GM12878 (cell line): ENCODE measurements at regions of chr14 and their contacts with region 1.

Region 1: DNA sequence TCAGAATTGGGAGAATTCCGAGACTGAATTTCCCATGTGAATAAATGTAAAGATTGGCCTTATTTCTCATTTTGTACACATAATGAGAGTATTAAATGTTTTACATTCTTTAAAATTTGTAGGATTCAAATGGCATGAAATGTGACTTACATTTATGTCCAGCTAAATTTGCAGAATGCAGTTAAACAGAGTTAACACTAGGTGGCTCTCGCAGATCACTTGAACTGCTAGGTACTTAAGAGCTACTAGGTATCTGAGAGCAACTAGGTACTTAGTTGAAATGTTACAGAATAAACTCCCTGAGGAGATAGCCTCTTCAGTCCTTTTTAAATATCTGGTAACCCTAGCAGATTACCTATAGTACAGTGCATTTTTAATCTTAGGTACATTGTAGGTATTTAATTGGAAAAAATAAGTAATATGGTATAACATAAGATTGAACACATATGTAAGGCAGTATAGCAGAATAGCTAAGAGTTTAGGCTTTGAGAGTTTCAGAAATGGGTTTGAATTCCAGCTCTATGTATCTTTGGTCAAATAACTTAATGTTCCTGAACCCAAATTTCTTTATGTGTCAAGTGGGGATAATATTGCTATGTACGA is 73.8 kb downstream of the KIAA0586 start:
- DNase-seq: peak; percentile 30
- ATAC-seq: peak; percentile 91
- H3K4me3 ChIP-seq: no peak overlapping the region
- H3K27ac ChIP-seq: no peak overlapping the region
- H3K4me1 ChIP-seq: no peaks in the 10 kb centered on the region
- H3K27me3 ChIP-seq: no peaks in the 10 kb centered on the region
- CTCF ChIP-seq: peak; percentile 72 to 89 (median 75)
- EP300 ChIP-seq: no peak
- POLR2A ChIP-seq: no peak
- RAD21 ChIP-seq: peak; percentile 96

Region 2: GRCh38 chr14:58088961-58089360 is 412.4 kb before region 1 on chr14:
- CTCF ChIA-PET with region 1: no interaction called
- POLR2A ChIA-PET with region 1: no interaction called
- RAD21 ChIA-PET with region 1: no interaction called
- SMC1A ChIA-PET with region 1: no interaction called
- in situ Hi-C with region 1: no loop called
- intact Hi-C with region 1: no loop called
- DNase-seq: no peak
- ATAC-seq: no peak
- H3K4me3 ChIP-seq: no peak overlapping the region
- H3K27ac ChIP-seq: no peak overlapping the region
- H3K4me1 ChIP-seq: no peaks in the 10 kb centered on the region
- H3K27me3 ChIP-seq: no peaks in the 10 kb centered on the region; a peak in 1 of 4 replicates
- CTCF ChIP-seq: no peak
- EP300 ChIP-seq: no peak
- POLR2A ChIP-seq: no peak
- RAD21 ChIP-seq: no peak

Region 3: GRCh38 chr14:58414845-58415244 is 86.5 kb before region 1 on chr14:
- CTCF ChIA-PET with region 1: no interaction called
- POLR2A ChIA-PET with region 1: no interaction called
- RAD21 ChIA-PET with region 1: no interaction called
- SMC1A ChIA-PET with region 1: no interaction called
- in situ Hi-C with region 1: no loop called
- intact Hi-C with region 1: no loop called
- DNase-seq: no peak
- ATAC-seq: peak; percentile 75
- H3K4me3 ChIP-seq: no peak overlapping the region
- H3K27ac ChIP-seq: no peak overlapping the region
- H3K4me1 ChIP-seq: no peaks in the 10 kb centered on the region
- H3K27me3 ChIP-seq: no peaks in the 10 kb centered on the region
- CTCF ChIP-seq: 0 out of 6 replicates have a peak, but pooled peaks of 2 of the 3 experiments have one; percentile 7 to 15
- EP300 ChIP-seq: no peak
- POLR2A ChIP-seq: no peak
- RAD21 ChIP-seq: no peak

Region 4: DNA sequence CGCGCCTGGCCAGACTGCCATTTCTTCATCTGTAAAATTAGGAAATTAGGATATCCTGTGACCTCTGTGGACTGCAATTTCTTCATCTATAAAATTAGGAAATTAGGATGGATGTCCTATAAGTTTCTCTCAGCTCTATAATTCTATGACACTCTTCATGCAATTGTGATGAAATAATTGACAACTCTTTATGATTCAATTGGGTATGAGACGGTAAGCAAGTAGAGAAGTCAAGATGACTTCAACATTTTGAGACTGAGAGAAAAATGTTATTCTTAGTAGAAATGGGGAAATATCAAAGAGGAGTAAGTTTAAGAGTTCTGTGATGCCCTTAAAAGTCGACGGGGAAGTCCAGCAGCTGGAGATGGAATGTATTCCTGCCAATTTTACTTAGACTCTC is 61.8 kb before region 1 on chr14:
- CTCF ChIA-PET with region 1: no interaction called
- POLR2A ChIA-PET with region 1: no interaction called
- RAD21 ChIA-PET with region 1: no interaction called
- SMC1A ChIA-PET with region 1: no interaction called
- in situ Hi-C with region 1: no loop called
- intact Hi-C with region 1: no loop called
- DNase-seq: no peak
- ATAC-seq: no peak
- H3K4me3 ChIP-seq: no peak overlapping the region
- H3K27ac ChIP-seq: no peak overlapping the region
- H3K4me1 ChIP-seq: no peaks in the 10 kb centered on the region
- H3K27me3 ChIP-seq: no peaks in the 10 kb centered on the region
- CTCF ChIP-seq: no peak
- EP300 ChIP-seq: no peak
- POLR2A ChIP-seq: no peak
- RAD21 ChIP-seq: no peak

Region 5: DNA sequence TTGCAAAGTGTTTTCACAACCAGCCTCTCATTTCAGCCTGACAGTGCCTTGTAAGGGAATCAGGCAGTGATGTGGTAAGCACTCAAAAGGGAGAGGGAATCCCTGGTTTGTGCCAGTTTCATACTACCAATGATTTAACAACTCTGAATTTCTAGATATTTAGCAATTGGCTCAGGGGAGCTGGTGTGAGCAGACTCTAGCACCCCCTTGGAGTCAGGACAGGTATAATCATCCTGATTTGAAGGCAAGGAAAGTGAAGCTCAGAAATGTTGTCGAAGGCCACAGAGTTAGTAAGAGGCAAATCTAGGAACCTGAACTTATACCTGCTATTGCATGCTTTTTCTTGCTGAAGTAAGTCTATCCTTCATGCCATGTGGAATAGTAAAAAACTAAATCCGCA is 73.3 kb after region 1 on chr14:
- CTCF ChIA-PET with region 1: interaction called, 15 read pairs
- POLR2A ChIA-PET with region 1: no interaction called
- RAD21 ChIA-PET with region 1: interaction called, 14 read pairs
- SMC1A ChIA-PET with region 1: interaction called, 6 read pairs
- in situ Hi-C with region 1: no loop called
- intact Hi-C with region 1: no loop called
- DNase-seq: no peak
- ATAC-seq: peak; percentile 52
- H3K4me3 ChIP-seq: no peak overlapping the region
- H3K27ac ChIP-seq: no peak overlapping the region
- H3K4me1 ChIP-seq: no peaks in the 10 kb centered on the region
- H3K27me3 ChIP-seq: no peaks in the 10 kb centered on the region
- CTCF ChIP-seq: peak in 2 of 3 experiments; percentile 14 to 18; a peak in 2 of 6 replicates
- EP300 ChIP-seq: no peak
- POLR2A ChIP-seq: no peak
- RAD21 ChIP-seq: no peak

Region 6: GRCh38 chr14:58882577-58883018 is 381.3 kb after region 1 on chr14:
- CTCF ChIA-PET with region 1: interaction called, 3 read pairs
- POLR2A ChIA-PET with region 1: no interaction called
- RAD21 ChIA-PET with region 1: interaction called, 3 read pairs
- SMC1A ChIA-PET with region 1: no interaction called
- in situ Hi-C with region 1: no loop called
- intact Hi-C with region 1: loop called (anchors 10 kb)
- DNase-seq: no peak
- ATAC-seq: no peak
- H3K4me3 ChIP-seq: no peak overlapping the region
- H3K27ac ChIP-seq: no peak overlapping the region
- H3K4me1 ChIP-seq: no peaks in the 10 kb centered on the region
- H3K27me3 ChIP-seq: no peaks in the 10 kb centered on the region
- CTCF ChIP-seq: no peak
- EP300 ChIP-seq: no peak
- POLR2A ChIP-seq: no peak
- RAD21 ChIP-seq: no peak

Region 7: DNA sequence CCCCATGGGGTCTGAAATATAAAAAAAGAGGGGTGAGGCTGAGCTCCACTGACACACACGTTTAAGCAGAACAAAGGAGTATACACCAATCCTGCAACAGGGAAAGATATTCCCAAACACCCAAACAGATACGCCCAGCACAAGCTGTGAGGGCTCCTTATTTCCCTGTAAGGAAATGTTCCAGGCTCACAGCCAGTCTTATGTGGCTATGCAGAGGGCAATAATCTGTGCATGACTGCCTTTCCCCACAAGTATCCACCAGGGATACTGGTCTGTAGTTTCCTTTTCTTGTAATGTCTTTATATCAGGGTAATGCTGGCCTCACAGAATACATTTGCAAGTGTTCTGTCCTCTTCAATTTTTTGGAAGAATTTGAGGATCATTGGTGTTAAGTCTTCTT is 545.4 kb after region 1 on chr14:
- CTCF ChIA-PET with region 1: interaction called, 9 read pairs
- POLR2A ChIA-PET with region 1: no interaction called
- RAD21 ChIA-PET with region 1: interaction called, 6 read pairs
- SMC1A ChIA-PET with region 1: interaction called, 10 read pairs
- in situ Hi-C with region 1: loop called (anchors 5 kb)
- intact Hi-C with region 1: no loop called
- DNase-seq: no peak
- ATAC-seq: no peak
- H3K4me3 ChIP-seq: no peak overlapping the region
- H3K27ac ChIP-seq: no peak overlapping the region
- H3K4me1 ChIP-seq: no peaks in the 10 kb centered on the region
- H3K27me3 ChIP-seq: no peaks in the 10 kb centered on the region
- CTCF ChIP-seq: no peak
- EP300 ChIP-seq: no peak
- POLR2A ChIP-seq: no peak
- RAD21 ChIP-seq: no peak

Region 8: GRCh38 chr14:59116984-59117415 is 615.7 kb after region 1 on chr14:
- CTCF ChIA-PET with region 1: interaction called, 13 read pairs
- POLR2A ChIA-PET with region 1: interaction called, 3 read pairs
- RAD21 ChIA-PET with region 1: interaction called, 44 read pairs
- SMC1A ChIA-PET with region 1: interaction called, 67 read pairs
- in situ Hi-C with region 1: no loop called
- intact Hi-C with region 1: no loop called
- DNase-seq: peak; percentile 44
- ATAC-seq: peak; percentile 95
- H3K4me3 ChIP-seq: no peak overlapping the region
- H3K27ac ChIP-seq: no peak overlapping the region
- H3K4me1 ChIP-seq: no peaks in the 10 kb centered on the region
- H3K27me3 ChIP-seq: no peaks in the 10 kb centered on the region; a peak in 1 of 4 replicates
- CTCF ChIP-seq: no peak
- EP300 ChIP-seq: peak; percentile 18 to 79; a peak in 3 of 4 replicates
- POLR2A ChIP-seq: no peak
- RAD21 ChIP-seq: no peak